Activated CD8-positive, alpha-beta memory T cell treated with anti-CD3 and anti-CD28 coated beads, Interleukin-2, amount 10 ng/mL, durations not matched to agents 7 days and 5 days (primary cell): ENCODE measurements at regions of chr14 and their contacts with region 1.

Region 1: GRCh38 chr14:64478634-64479250 is 13.4 kb downstream of the AKAP5 start:
- DNase-seq: no peak
- ATAC-seq: no peak
- H3K4me3 Mint-ChIP-seq: no peak overlapping the region
- H3K27ac Mint-ChIP-seq: no peak overlapping the region
- H3K4me1 Mint-ChIP-seq: peaks cover 25% of the 10 kb centered on the region
- H3K27me3 Mint-ChIP-seq: no peaks in the 10 kb centered on the region

Region 2: DNA sequence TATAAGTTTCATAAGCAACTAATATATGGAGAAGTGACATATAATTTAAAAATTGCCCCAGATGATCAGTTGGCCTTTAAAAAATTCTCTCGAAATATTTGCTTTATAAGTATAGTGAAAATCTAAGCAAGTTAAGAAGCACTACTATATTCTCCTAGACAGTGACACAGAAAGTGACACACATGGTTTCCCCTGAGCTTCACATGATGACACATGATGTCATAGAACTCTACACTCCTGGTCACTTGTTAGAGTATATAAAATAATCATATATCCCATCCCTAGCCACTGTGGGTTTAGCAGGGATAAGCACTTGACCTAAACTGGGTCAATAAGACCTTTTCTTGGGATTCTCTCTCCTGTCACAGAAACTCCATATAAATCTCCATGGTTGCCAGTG is 133.2 kb before region 1 on chr14:
- CTCF ChIA-PET with region 1: interaction called, 55 read pairs
- DNase-seq: no peak
- ATAC-seq: no peak
- H3K4me3 Mint-ChIP-seq: no peak overlapping the region
- H3K27ac Mint-ChIP-seq: no peak overlapping the region
- H3K4me1 Mint-ChIP-seq: peaks cover 5% of the 10 kb centered on the region
- H3K27me3 Mint-ChIP-seq: no peaks in the 10 kb centered on the region

Region 3: DNA sequence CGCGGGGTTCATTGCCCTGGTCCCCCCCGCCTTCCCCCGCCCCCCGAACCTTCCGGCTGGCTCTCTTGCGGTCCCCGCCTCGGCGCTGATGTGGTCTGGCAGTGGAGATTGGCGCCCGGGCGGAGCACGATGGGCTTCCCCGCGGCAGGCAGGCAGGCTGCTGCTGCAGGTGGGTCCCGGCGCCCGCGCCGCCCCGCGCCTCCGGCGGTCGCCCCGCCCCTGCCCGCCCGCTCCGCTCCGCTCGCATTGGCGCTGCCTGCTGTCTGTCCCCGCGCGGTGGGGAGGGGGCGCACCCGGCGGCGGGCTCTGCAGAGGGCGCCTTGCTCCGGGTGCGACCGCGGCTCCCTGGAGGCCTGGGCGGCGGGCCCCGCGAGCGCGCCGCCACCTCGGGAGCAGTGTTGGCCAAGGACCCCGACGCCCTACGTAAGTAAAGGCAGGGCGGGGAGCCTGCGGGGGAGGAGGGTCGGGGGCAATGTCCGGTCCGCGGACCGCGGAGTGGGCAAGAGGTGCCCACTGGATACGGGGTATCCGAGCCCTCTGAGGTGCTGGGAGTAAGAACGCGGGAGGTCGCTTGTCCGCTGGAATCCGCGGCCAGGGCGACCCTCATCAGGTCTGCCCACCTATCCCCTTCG is 13.4 kb before region 1 on chr14 and contains the start of gene AKAP5:
- CTCF ChIA-PET with region 1: interaction called, 23 read pairs
- DNase-seq: peak; percentile 71
- ATAC-seq: peak; percentile 91
- H3K4me3 Mint-ChIP-seq: peak within 1 kb of the TSS; percentile 79
- H3K27ac Mint-ChIP-seq: peak within 1 kb of the TSS; percentile 80
- H3K4me1 Mint-ChIP-seq: peaks cover 40% of the 10 kb centered on the region
- H3K27me3 Mint-ChIP-seq: no peaks in the 10 kb centered on the region
- total RNA-seq, gene AKAP5: 8.8 to 23.2 TPM

Region 4: GRCh38 chr14:64496764-64497163 is 18.0 kb after region 1 on chr14:
- CTCF ChIA-PET with region 1: interaction called, 21 read pairs
- DNase-seq: no peak
- ATAC-seq: no peak
- H3K4me3 Mint-ChIP-seq: no peak overlapping the region
- H3K27ac Mint-ChIP-seq: no peak overlapping the region
- H3K4me1 Mint-ChIP-seq: peaks cover 53% of the 10 kb centered on the region
- H3K27me3 Mint-ChIP-seq: no peaks in the 10 kb centered on the region